ENCODE measurements at regions of chr3 and their contacts with region 1.

Region 1: DNA sequence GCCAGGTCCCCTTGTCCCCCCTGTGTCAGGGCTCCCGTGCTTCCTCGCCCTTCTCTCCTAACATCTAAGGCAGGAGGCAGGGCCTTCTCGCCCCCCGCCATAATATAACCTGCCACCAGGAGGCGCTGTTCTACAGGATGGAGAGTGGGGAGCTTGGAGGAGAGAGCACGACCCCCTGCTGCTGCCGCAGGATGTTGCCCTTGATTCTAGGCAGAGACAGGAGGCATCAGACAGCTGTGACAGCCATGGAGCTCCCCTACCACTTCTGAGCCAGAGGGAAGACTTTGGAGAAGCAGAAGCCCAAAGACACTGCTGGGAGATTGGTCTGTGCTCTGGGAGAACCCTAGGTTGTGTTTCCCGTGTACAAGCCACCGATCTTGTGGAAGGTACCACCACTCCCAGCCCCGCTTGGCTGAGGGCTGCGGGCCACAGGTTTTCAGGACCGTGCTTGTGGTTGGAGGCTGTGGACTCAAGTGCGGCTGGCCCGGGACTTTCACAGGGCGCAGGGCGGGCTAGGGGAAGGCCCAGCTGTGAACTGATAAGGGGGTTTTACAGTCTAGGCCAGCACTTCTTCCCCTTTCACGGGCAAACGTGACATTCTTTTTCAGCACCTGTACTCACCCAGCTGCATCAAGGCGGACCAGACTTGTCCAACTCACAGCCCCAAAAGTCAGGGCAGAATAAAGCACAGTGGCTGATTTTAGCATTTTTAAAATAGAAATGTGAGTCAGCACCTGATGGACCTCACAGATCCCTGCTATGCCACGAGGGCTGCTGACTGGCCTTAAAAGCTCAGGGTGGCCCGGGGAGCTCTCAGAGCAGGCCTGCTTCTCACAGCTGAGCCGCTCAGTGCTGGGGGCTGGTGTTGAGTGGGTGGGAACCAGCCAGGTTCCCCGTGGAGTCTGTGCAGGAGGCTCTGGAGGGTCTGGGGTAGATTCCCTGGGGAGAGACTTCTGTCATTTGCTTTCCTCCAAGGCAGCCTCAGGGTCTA is 2.6 kb upstream of the TIGIT start:
- DNase-seq: peak; percentile 96
- H3K4me3 Mint-ChIP-seq: peak overlapping the region; percentile 75
- H3K27ac Mint-ChIP-seq: peak overlapping the region; percentile 97
- H3K4me1 Mint-ChIP-seq: peaks cover 59% of the 10 kb centered on the region
- H3K27me3 Mint-ChIP-seq: no peaks in the 10 kb centered on the region

Region 2: GRCh38 chr3:113485161-113485609 is 806.0 kb before region 1 on chr3:
- CTCF ChIA-PET with region 1: no interaction called
- POLR2A ChIA-PET with region 1: no interaction called
- intact Hi-C with region 1: no loop called
- DNase-seq: peak; percentile 19
- H3K4me3 Mint-ChIP-seq: no peak overlapping the region
- H3K27ac Mint-ChIP-seq: no peak overlapping the region
- H3K4me1 Mint-ChIP-seq: no peaks in the 10 kb centered on the region
- H3K27me3 Mint-ChIP-seq: no peaks in the 10 kb centered on the region

Region 3: GRCh38 chr3:114152519-114153151 is 138.6 kb before region 1 on chr3:
- CTCF ChIA-PET with region 1: interaction called, 15 read pairs
- POLR2A ChIA-PET with region 1: no interaction called
- intact Hi-C with region 1: loop called (anchors 2 kb)
- DNase-seq: peak; percentile 90
- H3K4me3 Mint-ChIP-seq: peak overlapping the region; percentile 25
- H3K27ac Mint-ChIP-seq: peak overlapping the region; percentile 18
- H3K4me1 Mint-ChIP-seq: peaks cover 8% of the 10 kb centered on the region
- H3K27me3 Mint-ChIP-seq: no peaks in the 10 kb centered on the region

Region 4: DNA sequence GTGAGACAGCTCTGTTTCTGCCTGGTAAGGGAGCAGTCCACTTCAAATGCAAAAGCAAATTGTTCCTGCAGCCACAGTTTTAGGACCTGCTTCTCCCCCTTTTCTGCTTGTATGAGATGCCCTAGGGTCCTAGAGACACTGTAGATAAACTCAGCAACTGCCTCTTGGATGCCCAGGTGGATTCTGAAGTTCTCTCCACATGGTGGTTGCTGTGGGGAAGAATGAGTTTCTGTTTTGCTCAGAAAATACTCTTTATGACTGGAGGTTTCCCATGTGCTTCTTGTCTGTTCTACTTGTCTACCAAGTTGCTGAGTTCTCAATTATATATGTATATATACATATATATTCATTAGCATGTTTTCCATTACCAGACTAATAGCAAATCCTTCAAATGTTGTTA is 48.3 kb before region 1 on chr3:
- CTCF ChIA-PET with region 1: interaction called, 3 read pairs
- POLR2A ChIA-PET with region 1: no interaction called
- intact Hi-C with region 1: loop called (anchors 2 kb)
- DNase-seq: peak; percentile 49
- H3K4me3 Mint-ChIP-seq: no peak overlapping the region
- H3K27ac Mint-ChIP-seq: no peak overlapping the region
- H3K4me1 Mint-ChIP-seq: peaks cover 22% of the 10 kb centered on the region
- H3K27me3 Mint-ChIP-seq: no peaks in the 10 kb centered on the region

Region 5: GRCh38 chr3:114308830-114309229 is 17.6 kb after region 1 on chr3:
- CTCF ChIA-PET with region 1: interaction called, 48 read pairs
- POLR2A ChIA-PET with region 1: interaction called, 24 read pairs
- intact Hi-C with region 1: loop called (anchors 1 kb)
- DNase-seq: peak; percentile 83
- H3K4me3 Mint-ChIP-seq: peak overlapping the region; percentile 70
- H3K27ac Mint-ChIP-seq: peak overlapping the region; percentile 99
- H3K4me1 Mint-ChIP-seq: peaks cover 77% of the 10 kb centered on the region
- H3K27me3 Mint-ChIP-seq: no peaks in the 10 kb centered on the region

Region 6: DNA sequence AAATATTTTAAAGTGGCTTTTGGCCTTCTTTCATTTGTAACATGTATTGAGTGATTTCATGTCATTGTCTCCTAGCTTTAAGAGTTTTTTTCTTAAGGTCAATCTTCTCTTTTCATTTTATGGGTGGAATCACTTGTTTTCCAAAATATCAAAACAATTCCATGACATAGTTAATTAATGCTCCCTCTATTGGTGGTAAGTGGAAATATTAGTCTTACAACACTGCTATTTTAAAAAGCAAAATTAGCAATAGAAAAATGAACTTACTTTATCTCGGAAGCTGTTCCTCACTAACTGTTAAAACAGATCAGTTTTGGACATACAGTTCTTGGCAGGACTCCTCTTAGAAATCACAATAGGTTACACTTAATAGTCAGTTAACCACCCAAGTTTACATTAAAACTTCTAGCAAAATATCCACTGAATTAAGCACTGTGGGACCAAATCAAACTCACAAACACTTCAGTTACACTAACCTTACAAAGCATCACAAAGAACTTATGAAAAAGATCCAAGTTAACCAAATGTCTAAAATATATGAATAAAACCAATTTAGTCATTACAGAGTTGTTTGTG is 45.0 kb after region 1 on chr3:
- CTCF ChIA-PET with region 1: interaction called, 34 read pairs
- POLR2A ChIA-PET with region 1: interaction called, 7 read pairs
- intact Hi-C with region 1: loop called (anchors 1 kb)
- DNase-seq: no peak
- H3K4me3 Mint-ChIP-seq: no peak overlapping the region
- H3K27ac Mint-ChIP-seq: peak overlapping the region; percentile 70
- H3K4me1 Mint-ChIP-seq: peaks cover 75% of the 10 kb centered on the region
- H3K27me3 Mint-ChIP-seq: no peaks in the 10 kb centered on the region

Region 7: GRCh38 chr3:114383875-114384557 is 92.8 kb after region 1 on chr3:
- CTCF ChIA-PET with region 1: interaction called, 30 read pairs
- POLR2A ChIA-PET with region 1: no interaction called
- intact Hi-C with region 1: no loop called
- DNase-seq: peak; percentile 83
- H3K4me3 Mint-ChIP-seq: peak overlapping the region; percentile 68
- H3K27ac Mint-ChIP-seq: peak overlapping the region; percentile 77
- H3K4me1 Mint-ChIP-seq: peaks cover 6% of the 10 kb centered on the region
- H3K27me3 Mint-ChIP-seq: no peaks in the 10 kb centered on the region

Region 8: DNA sequence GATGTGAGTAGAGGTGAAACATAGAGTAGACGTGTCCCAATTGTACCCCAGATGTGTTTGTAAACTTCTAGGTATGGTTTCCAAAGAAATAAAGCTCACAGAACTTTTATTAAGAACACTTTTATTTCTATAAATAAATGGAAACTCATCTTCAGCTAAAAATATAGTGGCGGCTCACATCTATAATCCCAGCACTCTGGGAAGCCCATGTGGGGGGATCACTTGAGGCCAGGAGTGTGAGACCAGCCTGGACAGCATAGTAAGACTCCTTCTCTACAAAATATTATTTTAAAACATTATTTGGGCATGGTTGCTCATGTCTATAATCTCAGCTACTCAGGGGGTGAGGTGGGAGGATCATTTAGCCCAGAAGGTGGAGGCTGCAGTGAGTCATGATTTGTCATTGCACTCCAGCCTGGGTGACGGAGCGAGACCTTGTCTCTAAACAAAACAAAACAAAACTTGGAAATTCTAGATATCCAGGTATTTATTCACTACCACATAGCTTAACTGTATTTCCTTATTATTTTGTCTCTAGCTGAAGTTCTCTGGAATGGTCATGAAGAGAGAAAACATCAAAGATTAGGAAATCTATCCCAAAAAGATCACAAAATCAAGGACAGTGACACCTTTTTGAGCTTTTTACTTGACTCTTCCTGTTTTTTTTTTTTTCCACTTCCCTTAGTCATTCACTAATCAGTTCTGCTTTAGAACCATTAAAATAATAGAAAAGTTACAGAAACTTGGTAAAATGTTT is 260.7 kb after region 1 on chr3:
- CTCF ChIA-PET with region 1: no interaction called
- POLR2A ChIA-PET with region 1: no interaction called
- intact Hi-C with region 1: no loop called
- DNase-seq: no peak
- H3K4me3 Mint-ChIP-seq: no peak overlapping the region
- H3K27ac Mint-ChIP-seq: no peak overlapping the region
- H3K4me1 Mint-ChIP-seq: no peaks in the 10 kb centered on the region
- H3K27me3 Mint-ChIP-seq: no peaks in the 10 kb centered on the region

Region 9: DNA sequence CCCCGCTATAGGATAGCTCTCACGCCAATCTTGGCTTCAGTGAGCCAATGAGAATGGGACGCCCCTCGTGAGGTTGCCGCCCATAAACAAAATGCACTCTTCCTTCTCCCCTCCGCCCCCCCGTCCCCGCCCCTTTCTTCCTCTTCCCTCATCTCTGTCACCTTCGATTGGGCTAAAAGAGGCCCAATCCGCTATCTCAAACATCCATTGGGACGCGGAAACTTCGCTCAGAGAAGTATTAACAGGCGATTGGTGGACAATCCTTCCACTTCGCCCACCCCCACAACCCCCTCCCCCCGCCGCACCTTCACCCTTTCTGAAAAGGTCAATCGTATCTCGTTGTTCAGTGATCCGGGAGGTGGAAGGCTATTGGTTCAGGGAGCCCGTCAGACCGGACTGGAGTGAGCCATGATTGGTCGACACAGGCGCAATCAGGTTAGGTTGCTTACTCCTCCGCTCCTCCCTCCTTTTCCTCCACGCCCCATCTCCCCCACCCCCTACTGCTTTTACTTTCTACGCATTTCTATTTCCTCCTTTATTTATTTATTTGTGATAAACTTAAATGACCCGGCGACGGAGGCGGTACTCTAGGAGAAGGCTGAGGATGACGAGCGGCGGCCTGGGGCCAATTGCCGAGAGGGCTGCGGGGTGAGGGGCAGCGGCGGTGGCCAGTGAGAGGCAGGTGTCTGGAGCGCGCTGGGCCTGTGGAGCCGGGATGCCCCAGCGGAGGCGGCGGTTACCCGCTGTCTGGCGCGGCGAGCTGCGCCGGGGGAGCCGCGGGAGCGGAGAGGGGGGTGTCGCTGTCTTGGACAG is 856.3 kb after region 1 on chr3:
- CTCF ChIA-PET with region 1: no interaction called
- POLR2A ChIA-PET with region 1: no interaction called
- intact Hi-C with region 1: loop called (anchors 10 kb)
- DNase-seq: peak; percentile 98
- H3K4me3 Mint-ChIP-seq: peak overlapping the region; percentile 94
- H3K27ac Mint-ChIP-seq: peak overlapping the region; percentile 91
- H3K4me1 Mint-ChIP-seq: peaks cover 23% of the 10 kb centered on the region
- H3K27me3 Mint-ChIP-seq: peaks cover 2% of the 10 kb centered on the region

Measured in activated CD4-positive, alpha-beta memory T cell treated with anti-CD3 and anti-CD28 coated beads for 36 hours (primary cell).